ENCODE measurements at regions of chr6 and their contacts with region 1.

Region 1: GRCh38 chr6:158026054-158026900 is 44.6 kb downstream of the SYNJ2 start:
- DNase-seq: peak; percentile 80
- CTCF ChIP-seq: peak; percentile 65

Region 2: DNA sequence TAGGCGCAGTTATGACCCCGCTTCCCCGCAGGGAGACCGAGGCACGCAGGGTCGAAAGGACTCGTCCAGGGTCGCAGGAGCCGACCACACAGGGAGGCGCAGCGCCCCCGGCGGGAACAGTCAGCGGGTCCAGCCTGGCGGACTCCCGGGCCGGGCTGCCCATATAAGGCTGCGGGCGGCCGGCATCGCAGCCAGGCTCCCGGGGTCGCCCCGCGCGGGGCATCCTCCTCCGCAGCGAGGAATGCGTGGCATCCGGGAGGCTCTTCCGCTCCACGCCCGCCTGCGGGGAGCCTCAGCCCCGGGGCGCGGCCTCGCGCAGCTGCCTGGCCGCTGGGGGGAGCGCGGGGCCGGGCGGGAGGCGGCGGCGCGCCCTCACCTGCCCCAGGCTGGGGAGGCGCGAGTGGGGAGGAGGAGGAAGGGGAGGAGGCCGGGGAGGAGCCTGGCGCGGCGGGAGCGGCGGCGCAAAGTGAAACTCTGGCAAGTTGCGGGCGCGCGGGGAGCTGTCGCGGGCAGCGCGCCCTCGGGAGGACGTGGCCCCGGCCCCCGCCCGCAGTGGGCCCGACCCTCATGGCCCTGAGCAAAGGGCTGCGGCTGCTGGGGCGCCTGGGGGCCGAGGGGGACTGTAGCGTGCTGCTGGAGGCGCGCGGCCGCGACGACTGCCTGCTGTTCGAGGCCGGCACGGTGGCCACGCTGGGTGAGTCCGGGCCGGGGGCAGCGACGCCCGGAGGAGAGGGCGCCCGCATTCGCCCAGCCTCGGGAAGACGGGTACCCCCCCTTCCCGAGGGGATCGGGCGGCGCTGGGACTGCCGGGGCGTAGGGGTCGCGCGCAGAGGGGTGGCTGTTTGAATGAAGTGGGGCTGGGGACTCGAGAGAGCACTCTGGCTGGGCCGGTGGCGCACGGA is 44.6 kb before region 1 on chr6 and contains the start of gene SYNJ2:
- CTCF ChIA-PET with region 1: interaction called, 12 read pairs
- POLR2A ChIA-PET with region 1: no interaction called
- DNase-seq: peak; percentile 84
- CTCF ChIP-seq: peak; percentile 37

Region 3: GRCh38 chr6:158009114-158009891 is 17.0 kb before region 1 on chr6:
- CTCF ChIA-PET with region 1: interaction called, 48 read pairs
- POLR2A ChIA-PET with region 1: no interaction called
- DNase-seq: no peak
- CTCF ChIP-seq: no peak

Region 4: GRCh38 chr6:158040051-158040803 is 13.9 kb after region 1 on chr6:
- CTCF ChIA-PET with region 1: interaction called, 37 read pairs
- POLR2A ChIA-PET with region 1: interaction called, 3 read pairs
- DNase-seq: peak; percentile 56
- CTCF ChIP-seq: no peak

Region 5: DNA sequence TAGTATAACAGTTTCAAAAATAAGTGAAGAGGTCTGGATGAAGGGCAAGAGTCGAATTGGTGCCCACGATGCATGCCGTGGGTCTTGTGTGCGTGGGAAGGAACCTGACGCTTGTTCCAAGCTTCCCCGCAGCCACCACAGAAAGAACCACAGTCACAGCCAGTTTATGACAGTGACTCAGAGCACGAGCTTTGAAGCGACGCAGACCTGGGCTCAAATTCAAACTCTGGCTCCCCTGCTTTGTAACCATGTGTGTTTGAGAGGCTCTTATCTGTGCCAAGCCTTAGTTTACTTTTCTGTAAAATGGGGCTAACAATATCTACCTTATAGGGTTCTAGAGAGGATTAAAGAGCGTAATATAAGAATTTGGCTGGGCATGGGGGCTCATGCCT is 20.8 kb after region 1 on chr6:
- CTCF ChIA-PET with region 1: interaction called, 37 read pairs
- POLR2A ChIA-PET with region 1: no interaction called
- DNase-seq: no peak
- CTCF ChIP-seq: no peak

Region 6: DNA sequence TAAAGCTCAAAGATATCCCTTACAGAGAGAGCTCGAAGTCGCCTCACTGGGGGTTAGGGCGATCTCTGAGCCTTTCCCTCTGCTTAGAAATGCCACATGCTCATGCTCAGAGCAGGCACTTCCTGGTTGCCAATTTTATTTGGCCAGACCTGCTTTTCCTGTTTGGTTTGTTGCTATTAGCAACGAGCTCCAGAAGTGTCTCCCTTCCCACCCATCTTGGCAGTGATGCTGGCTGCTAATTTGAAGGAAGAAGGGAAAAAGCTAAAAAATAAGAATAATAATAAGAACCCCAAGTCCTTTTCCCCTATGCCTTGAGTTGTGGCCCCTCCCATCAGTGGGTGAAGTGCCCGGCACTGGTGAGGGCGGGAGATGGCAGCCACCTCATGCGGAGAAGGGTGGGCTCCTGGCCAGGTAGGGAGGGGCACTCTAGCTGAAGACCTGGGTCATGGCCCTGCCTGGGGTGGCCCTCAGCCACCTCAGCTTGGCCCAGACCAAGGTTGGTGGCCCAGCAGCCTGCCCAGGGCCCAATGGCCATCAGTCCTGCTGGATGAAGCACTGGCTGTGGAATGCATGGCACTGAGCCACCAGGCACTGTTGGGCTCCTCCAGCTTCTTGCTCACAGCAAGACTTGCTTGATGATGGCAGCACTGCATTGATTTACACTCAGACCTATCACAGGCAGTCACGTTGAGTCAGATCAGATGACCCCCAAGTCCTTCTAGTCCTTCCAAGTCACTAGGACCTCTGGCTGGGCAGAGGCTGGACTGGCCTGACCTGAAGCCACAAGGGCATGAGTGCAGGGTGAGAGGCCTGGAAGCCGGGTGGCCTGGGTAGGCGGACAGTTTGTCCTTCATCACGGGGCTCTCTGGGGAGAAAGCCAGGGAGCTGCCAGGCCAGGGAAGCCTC is 34.4 kb after region 1 on chr6:
- CTCF ChIA-PET with region 1: interaction called, 21 read pairs
- POLR2A ChIA-PET with region 1: no interaction called
- DNase-seq: no peak
- CTCF ChIP-seq: no peak

Region 7: DNA sequence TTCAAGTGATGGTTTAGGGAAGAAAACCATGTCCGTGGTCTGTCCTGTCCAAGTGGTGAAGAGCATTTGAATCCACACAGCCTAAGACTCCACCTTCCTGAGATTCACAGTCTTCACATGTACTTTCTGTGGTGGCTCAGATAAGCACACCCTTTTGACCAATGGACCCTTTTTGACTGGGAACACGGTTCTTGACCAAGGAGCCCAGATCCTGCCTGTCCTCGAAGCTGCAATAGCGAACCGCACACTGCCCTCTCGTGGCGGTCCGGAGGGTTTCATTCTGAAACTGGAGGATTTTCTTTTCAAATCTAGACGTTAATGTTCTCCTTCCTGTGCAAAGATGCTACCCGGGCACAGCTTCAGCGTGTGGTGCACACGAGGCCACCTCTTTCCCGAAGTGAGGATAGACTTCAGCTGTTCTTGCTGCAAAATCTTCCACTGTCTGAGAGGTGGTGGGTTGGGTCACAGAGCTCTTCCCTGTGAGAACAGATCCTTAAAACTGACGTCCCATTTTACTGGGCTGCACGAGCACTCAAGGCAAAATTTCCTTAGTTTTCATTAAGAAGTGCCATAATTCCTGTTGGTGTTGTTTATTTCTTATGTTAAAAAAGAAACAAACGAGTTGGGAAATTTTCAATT is 45.9 kb after region 1 on chr6:
- CTCF ChIA-PET with region 1: interaction called, 32 read pairs
- POLR2A ChIA-PET with region 1: no interaction called
- DNase-seq: peak; percentile 85
- CTCF ChIP-seq: peak; percentile 81

Measured in GM10248 (cell line).